ENCODE measurements at regions of chr15 and their contacts with region 1.

Region 1: GRCh38 chr15:56732921-56733797 is at the start of gene ZNF280D:
- DNase-seq: peak; percentile 94
- total RNA-seq, gene ZNF280D: 34.7 TPM

Region 2: GRCh38 chr15:56815247-56815646 is 82.1 kb after region 1 on chr15:
- intact Hi-C with region 1: loop called (anchors 1 kb)
- DNase-seq: no peak

Region 3: GRCh38 chr15:56886932-56887781 is 154.0 kb after region 1 on chr15:
- intact Hi-C with region 1: loop called (anchors 10 kb)
- DNase-seq: peak; percentile 96